CD4-positive, alpha-beta memory T cell (primary cell): ENCODE measurements at regions of chr9 and their contacts with region 1.

Region 1: GRCh38 chr9:124771021-124771866 is at the start of gene NR6A1:
- DNase-seq: peak; percentile 92 to 95 (median 94)
- H3K4me3 ChIP-seq: peak within 1 kb of the TSS; percentile 50 to 66
- H3K4me3 Mint-ChIP-seq: peak within 1 kb of the TSS; percentile 89 to 98 (median 91)
- H3K27ac ChIP-seq: peak within 1 kb of the TSS; percentile 35
- H3K27ac Mint-ChIP-seq: peak within 1 kb of the TSS; percentile 89 to 95 (median 95)
- H3K4me1 ChIP-seq: peaks cover 24% of the 10 kb centered on the region
- H3K4me1 Mint-ChIP-seq: peaks cover 20 to 53% (median 34%) of the 10 kb centered on the region in 4 donors
- H3K27me3 ChIP-seq: peaks cover 36% of the 10 kb centered on the region
- H3K27me3 Mint-ChIP-seq: peaks cover 49 to 54% of the 10 kb centered on the region in 2 donors
- total RNA-seq, gene NR6A1: 0.06 TPM in 1 of 2 experiments, not detected in the other

Region 2: GRCh38 chr9:124852829-124853531 is 81.7 kb after region 1 on chr9 and contains the start of gene WDR38:
- CTCF ChIA-PET with region 1: interaction called, 230 read pairs
- POLR2A ChIA-PET with region 1: interaction called, 20 read pairs
- intact Hi-C with region 1: loop called (anchors 1 kb)
- DNase-seq: peak; percentile 78 to 91 (median 80)
- H3K4me3 ChIP-seq: peak within 1 kb of the TSS; percentile 3 to 58
- H3K4me3 Mint-ChIP-seq: peak within 1 kb of the TSS; percentile 55 to 79 (median 72)
- H3K27ac ChIP-seq: peak within 1 kb of the TSS; percentile 69
- H3K27ac Mint-ChIP-seq: peak within 1 kb of the TSS; percentile 57 to 95 (median 83)
- H3K4me1 ChIP-seq: peaks cover 11% of the 10 kb centered on the region
- H3K4me1 Mint-ChIP-seq: peaks cover 5 to 19% (median 6%) of the 10 kb centered on the region in 4 donors
- H3K27me3 ChIP-seq: no peaks in the 10 kb centered on the region
- H3K27me3 Mint-ChIP-seq: peaks cover 0 to 1% of the 10 kb centered on the region in 2 donors
- total RNA-seq, gene WDR38: not detected

Region 3: GRCh38 chr9:124868511-124869465 is 97.5 kb after region 1 on chr9:
- CTCF ChIA-PET with region 1: interaction called, 3 read pairs
- POLR2A ChIA-PET with region 1: interaction called, 10 read pairs
- intact Hi-C with region 1: no loop called
- DNase-seq: peak; percentile 90 to 94 (median 92)
- H3K4me3 ChIP-seq: peak overlapping the region; percentile 58 to 85
- H3K4me3 Mint-ChIP-seq: peak overlapping the region; percentile 90 to 96 (median 93)
- H3K27ac ChIP-seq: peak overlapping the region; percentile 91
- H3K27ac Mint-ChIP-seq: peak overlapping the region; percentile 94 to 98 (median 95)
- H3K4me1 ChIP-seq: peaks cover 47% of the 10 kb centered on the region
- H3K4me1 Mint-ChIP-seq: peaks cover 29 to 64% (median 43%) of the 10 kb centered on the region in 4 donors
- H3K27me3 ChIP-seq: no peaks in the 10 kb centered on the region
- H3K27me3 Mint-ChIP-seq: no peaks in the 10 kb centered on the region

Region 4: DNA sequence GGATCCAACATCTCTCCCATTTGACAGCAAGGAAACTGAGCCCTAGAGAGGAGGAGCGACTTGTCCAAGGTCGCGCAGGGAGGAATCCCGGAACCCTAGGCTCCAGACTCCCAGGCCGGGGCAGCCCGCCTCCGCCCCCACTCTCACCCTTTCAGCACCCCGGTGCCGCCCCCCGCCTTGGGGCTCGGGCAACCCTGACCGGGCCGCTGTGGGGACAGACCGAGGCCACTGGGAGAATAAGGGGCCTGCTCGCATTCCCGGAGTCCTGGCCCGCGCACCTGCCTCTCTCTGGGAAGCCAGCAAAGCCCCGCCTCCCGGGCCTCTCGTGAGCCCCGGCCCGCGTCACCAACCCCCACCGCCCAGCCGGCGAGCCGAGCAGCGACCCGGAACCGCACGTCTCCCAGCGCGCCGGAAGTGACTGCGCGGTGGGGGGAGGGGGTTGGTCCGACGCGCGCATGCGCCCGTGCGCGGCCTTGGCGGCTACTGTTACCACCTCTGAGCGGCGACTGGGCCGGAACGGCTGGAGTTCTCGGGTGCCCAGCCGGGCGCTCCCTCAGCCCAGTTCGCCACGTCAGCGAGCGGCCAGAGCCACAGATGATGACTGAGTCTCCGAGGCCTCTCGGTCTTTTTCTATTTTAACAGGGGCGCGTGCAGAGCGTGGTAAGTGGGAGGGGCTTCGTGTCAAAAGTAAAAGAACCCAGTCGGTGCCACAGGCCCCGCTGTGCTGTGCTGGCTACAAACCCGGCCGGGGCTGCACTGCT is 169.6 kb after region 1 on chr9 and contains the start of gene GOLGA1:
- CTCF ChIA-PET with region 1: no interaction called
- POLR2A ChIA-PET with region 1: interaction called, 5 read pairs
- intact Hi-C with region 1: loop called (anchors 1 kb)
- DNase-seq: peak; percentile 93 to 95 (median 94)
- H3K4me3 ChIP-seq: peak within 1 kb of the TSS; percentile 94 to 99
- H3K4me3 Mint-ChIP-seq: peak within 1 kb of the TSS; percentile 91 to 97 (median 96)
- H3K27ac ChIP-seq: peak within 1 kb of the TSS; percentile 96
- H3K27ac Mint-ChIP-seq: peak within 1 kb of the TSS; percentile 86 to 99 (median 97)
- H3K4me1 ChIP-seq: peaks cover 18% of the 10 kb centered on the region
- H3K4me1 Mint-ChIP-seq: peaks cover 13 to 35% (median 27%) of the 10 kb centered on the region in 4 donors
- H3K27me3 ChIP-seq: no peaks in the 10 kb centered on the region
- H3K27me3 Mint-ChIP-seq: no peaks in the 10 kb centered on the region
- total RNA-seq, gene GOLGA1: 27.3 to 38.3 TPM

Region 5: DNA sequence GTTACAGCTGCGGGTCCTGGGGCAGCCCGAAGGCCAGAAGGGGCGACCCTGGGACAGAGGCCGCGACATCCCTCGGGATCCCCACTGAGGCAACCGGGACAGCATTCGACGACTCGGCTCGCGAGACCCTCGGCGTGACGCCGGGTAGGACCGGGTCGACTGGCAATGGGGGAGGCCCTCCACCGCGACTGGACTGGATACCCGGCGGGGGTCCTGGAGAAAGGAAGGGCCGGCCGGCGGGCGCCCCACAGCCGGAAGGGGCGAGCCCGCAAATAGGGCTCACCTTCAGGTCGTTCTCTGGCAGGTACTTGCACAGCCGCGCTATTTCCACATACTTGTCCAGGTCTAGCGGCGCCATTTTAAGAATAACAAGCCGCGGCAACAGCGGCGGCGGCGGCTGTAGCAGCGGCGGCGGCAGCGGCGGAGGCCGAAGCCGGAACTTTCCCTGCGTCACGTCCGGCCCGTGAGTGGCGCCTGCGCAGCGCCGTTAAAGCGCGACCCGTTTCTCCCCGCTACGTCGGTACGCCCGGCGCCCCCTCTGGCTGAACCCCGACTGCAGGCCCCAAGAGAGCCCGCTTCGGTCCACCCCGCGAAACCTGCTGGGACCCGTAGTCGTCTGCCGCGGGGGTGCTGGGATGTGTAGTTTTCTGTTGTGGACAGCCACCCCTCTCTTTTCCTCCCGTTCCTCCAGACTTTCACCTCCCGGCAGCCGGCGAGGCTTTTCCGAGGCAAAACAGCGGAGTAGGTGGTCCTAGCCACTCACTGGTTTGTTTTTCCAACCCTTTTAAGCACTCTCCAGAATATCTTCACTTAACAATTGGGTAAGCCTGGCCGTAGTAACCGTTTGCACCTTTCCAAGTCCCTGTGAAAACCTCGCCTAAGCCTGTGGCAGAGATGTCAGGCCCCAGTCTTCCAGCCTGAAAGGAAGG is 418.4 kb after region 1 on chr9 and contains the start of gene PPP6C:
- CTCF ChIA-PET with region 1: no interaction called
- POLR2A ChIA-PET with region 1: interaction called, 3 read pairs
- intact Hi-C with region 1: loop called (anchors 2 kb)
- DNase-seq: peak; percentile 95 to 98 (median 96)
- H3K4me3 ChIP-seq: peak within 1 kb of the TSS; percentile 84 to 100
- H3K4me3 Mint-ChIP-seq: peak within 1 kb of the TSS; percentile 89 to 98 (median 94)
- H3K27ac ChIP-seq: peak within 1 kb of the TSS; percentile 97
- H3K27ac Mint-ChIP-seq: peak within 1 kb of the TSS; percentile 89 to 97 (median 94)
- H3K4me1 ChIP-seq: peaks cover 81% of the 10 kb centered on the region
- H3K4me1 Mint-ChIP-seq: peaks cover 20 to 75% (median 48%) of the 10 kb centered on the region in 4 donors
- H3K27me3 ChIP-seq: no peaks in the 10 kb centered on the region
- H3K27me3 Mint-ChIP-seq: no peaks in the 10 kb centered on the region
- total RNA-seq, gene PPP6C: 49.2 TPM

Region 6: DNA sequence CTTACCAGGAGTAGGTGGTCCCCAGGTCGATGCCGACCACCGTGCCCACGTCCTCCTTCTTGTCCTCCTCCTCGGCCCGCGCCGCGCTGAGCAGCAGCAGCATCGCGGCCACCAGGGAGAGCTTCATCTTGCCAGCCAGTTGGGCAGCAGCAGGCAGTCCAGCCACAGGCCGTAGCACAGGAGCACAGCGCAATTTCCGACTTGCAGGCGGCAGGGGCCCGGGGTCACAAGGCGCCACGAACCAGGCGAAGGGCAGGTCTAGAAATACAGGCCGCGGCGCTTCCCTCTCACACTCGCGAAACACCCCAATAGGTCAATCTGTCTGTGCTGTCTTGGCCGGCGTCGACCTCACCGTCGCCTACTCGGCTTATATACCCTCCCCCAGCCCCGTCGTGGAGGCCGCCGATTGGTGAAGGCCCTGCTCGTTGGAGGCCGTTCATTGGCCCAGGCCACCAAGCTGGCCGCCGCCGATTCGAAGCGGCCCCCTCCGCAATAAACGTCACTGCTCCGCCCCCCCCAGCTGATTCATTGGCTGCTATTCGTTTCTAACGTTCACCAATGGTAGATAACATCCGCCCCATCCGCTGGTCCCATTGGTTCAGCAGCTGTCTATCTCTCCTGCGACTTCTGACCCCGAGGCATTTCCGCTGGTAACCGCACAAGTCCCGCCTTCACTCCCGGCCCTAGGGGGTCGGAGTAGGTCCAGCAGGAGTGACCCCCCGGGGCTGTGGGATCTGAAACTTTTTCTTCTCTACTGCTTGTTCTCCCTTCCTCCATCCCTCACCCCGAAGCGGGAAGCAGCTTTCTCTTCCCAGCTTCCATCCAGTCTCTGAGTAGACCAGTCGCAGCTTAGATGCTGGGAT is 470.0 kb after region 1 on chr9 and contains the start of gene HSPA5:
- CTCF ChIA-PET with region 1: no interaction called
- POLR2A ChIA-PET with region 1: no interaction called
- intact Hi-C with region 1: loop called (anchors 5 kb)
- DNase-seq: peak; percentile 99 to 100 (median 99)
- H3K4me3 ChIP-seq: peak within 1 kb of the TSS; percentile 92 to 100
- H3K4me3 Mint-ChIP-seq: peak within 1 kb of the TSS; percentile 92 to 99 (median 98)
- H3K27ac ChIP-seq: peak within 1 kb of the TSS; percentile 97
- H3K27ac Mint-ChIP-seq: peak within 1 kb of the TSS; percentile 97 to 100 (median 100)
- H3K4me1 ChIP-seq: peaks cover 50% of the 10 kb centered on the region
- H3K4me1 Mint-ChIP-seq: peaks cover 30 to 60% (median 42%) of the 10 kb centered on the region in 4 donors
- H3K27me3 ChIP-seq: no peaks in the 10 kb centered on the region
- H3K27me3 Mint-ChIP-seq: peaks cover 0 to 3% of the 10 kb centered on the region in 2 donors
- total RNA-seq, gene HSPA5: 147 to 154 TPM

Region 7: GRCh38 chr9:125374443-125375309 is 603.4 kb after region 1 on chr9:
- CTCF ChIA-PET with region 1: interaction called, 5 read pairs
- POLR2A ChIA-PET with region 1: no interaction called
- intact Hi-C with region 1: loop called (anchors 1 kb)
- DNase-seq: peak; percentile 57 to 63 (median 62)
- H3K4me3 ChIP-seq: peak overlapping the region in 1 of 2 donors; percentile 18
- H3K4me3 Mint-ChIP-seq: peak overlapping the region in 6 of 8 donors; percentile 7 to 68 (median 50)
- H3K27ac ChIP-seq: no peak overlapping the region
- H3K27ac Mint-ChIP-seq: no peak overlapping the region
- H3K4me1 ChIP-seq: peaks cover 10% of the 10 kb centered on the region
- H3K4me1 Mint-ChIP-seq: peaks cover 0 to 11% (median 6%) of the 10 kb centered on the region in 4 donors
- H3K27me3 ChIP-seq: no peaks in the 10 kb centered on the region
- H3K27me3 Mint-ChIP-seq: peaks cover 5 to 7% of the 10 kb centered on the region in 2 donors